Activated CD8-positive, alpha-beta T cell treated with anti-CD3 and anti-CD28 coated beads for 36 hours (primary cell): ENCODE measurements at regions of chr9 and their contacts with region 1.

Region 1: DNA sequence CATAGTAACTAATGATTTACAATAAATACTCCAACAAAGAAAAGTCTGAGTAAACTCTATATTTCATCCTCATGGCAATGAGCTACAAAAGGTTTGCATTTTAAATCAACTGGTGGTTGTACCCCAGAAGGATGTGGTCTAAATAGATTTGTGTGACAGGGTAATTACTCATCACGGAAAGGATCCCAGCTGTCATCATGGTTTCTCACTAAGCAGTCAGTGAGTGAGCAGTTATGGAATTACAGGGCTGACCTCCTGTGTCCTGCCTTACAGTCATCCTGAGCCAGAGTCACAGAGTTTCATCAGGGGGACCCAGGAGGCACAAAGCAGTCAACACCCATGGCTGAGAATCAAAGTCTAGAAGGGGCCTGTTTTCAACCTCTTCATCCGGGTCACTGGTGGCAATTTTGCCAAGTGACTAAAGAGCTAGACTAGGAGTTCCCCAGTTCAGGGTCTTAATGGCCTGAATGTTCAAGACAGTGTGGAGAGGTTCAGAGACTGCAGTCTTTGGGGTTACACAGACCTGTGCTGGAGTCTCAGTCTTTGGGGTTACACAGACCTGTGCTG is 210.7 kb upstream of the SLC24A2 start:
- DNase-seq: peak; percentile 86
- ATAC-seq: peak; percentile 95
- H3K4me3 Mint-ChIP-seq: no peak overlapping the region
- H3K27ac Mint-ChIP-seq: peak overlapping the region; percentile 99
- H3K4me1 Mint-ChIP-seq: peaks cover 43% of the 10 kb centered on the region
- H3K27me3 Mint-ChIP-seq: no peaks in the 10 kb centered on the region
- CTCF ChIP-seq: no peak

Region 2: DNA sequence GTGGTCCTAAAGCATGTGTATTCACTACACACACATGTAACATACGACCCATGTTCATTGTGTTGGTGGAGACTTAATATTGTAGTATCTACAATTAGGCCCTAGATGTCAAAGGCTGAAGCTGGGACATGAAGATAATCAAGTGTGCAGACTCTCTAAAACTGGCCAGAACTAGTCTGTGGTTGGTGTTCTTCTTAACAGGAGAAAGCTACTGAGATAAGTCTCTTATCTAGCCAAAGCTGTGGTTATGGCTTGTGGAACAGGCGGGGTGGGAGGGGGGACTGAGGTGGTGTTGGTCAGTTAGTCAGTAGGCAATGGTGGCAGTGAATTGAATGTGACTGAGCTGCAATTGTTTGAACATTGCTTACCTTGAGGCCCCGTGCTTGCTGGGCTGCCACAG is 98.0 kb before region 1 on chr9:
- CTCF ChIA-PET with region 1: no interaction called
- POLR2A ChIA-PET with region 1: no interaction called
- intact Hi-C with region 1: no loop called
- DNase-seq: no peak
- ATAC-seq: no peak
- H3K4me3 Mint-ChIP-seq: no peak overlapping the region
- H3K27ac Mint-ChIP-seq: no peak overlapping the region
- H3K4me1 Mint-ChIP-seq: no peaks in the 10 kb centered on the region
- H3K27me3 Mint-ChIP-seq: no peaks in the 10 kb centered on the region
- CTCF ChIP-seq: no peak

Region 3: DNA sequence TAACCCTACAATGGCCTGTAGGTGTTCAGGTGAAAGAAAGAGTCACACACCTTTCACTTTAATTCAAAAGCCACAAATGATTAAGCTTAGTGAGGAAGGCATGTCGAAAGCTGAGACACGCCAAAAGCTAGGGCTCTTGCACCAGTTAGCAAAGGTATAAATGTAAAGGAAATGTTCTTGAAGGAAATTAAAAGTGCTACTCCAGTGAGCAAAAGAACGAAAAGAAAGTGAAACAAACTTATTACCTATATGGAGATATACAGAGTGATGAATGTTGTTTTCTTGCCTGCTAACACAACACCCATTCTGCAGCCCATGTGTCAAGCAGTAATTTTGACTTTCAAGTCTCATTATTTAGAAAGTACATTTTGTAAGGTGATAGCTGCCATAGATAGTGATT is 43.5 kb after region 1 on chr9:
- CTCF ChIA-PET with region 1: no interaction called
- POLR2A ChIA-PET with region 1: no interaction called
- intact Hi-C with region 1: loop called (anchors 1 kb)
- DNase-seq: peak; percentile 8
- ATAC-seq: peak; percentile 78
- H3K4me3 Mint-ChIP-seq: peak overlapping the region; percentile 55
- H3K27ac Mint-ChIP-seq: peak overlapping the region; percentile 40
- H3K4me1 Mint-ChIP-seq: peaks cover 26% of the 10 kb centered on the region
- H3K27me3 Mint-ChIP-seq: no peaks in the 10 kb centered on the region
- CTCF ChIP-seq: no peak

Region 4: GRCh38 chr9:20054734-20055133 is 55.2 kb after region 1 on chr9:
- CTCF ChIA-PET with region 1: no interaction called
- POLR2A ChIA-PET with region 1: no interaction called
- intact Hi-C with region 1: no loop called
- DNase-seq: no peak
- ATAC-seq: no peak
- H3K4me3 Mint-ChIP-seq: no peak overlapping the region
- H3K27ac Mint-ChIP-seq: no peak overlapping the region
- H3K4me1 Mint-ChIP-seq: no peaks in the 10 kb centered on the region
- H3K27me3 Mint-ChIP-seq: peaks cover 4% of the 10 kb centered on the region
- CTCF ChIP-seq: no peak

Region 5: DNA sequence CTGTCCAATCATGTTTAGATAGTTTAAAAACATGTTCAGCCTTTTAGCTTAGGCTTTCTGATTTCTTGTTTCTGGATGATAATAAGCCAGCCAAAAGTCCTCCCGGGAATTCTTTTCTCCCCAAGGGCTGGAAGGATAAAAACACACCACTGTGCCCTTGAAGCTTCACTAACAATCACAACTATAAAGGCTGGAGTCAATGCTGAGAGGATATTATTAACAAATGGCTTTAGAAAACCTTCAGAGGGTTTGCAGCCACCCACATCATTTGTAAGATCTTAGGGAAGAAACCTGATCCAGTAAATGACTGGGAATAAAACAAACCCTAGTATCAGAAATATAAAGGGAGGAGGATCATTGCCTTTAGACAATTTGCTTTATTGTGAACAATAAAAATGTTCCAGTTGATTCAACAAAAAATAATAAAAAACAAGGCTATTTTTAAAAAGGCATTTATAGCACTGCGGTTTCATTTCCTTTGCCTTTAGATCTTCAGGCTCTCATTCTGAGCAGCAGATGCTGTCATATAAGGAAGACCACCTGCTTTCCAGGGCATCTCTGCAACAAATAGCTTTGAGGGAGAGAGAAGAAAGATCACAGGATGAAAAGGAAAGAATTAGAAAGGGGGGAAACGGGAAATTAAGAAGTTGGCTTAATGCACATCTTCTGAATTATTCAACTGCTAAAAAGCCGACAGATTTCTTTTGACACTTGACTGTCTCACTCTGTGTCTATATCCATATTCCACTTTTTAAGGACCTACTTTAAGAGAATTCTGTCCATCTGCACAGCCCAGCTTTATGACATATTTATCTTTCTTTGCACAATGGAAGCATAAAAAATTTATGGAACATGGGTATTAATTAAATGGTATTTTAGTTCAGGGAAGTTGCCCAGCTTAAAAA is 66.5 kb after region 1 on chr9:
- CTCF ChIA-PET with region 1: no interaction called
- POLR2A ChIA-PET with region 1: no interaction called
- intact Hi-C with region 1: no loop called
- DNase-seq: no peak
- ATAC-seq: no peak
- H3K4me3 Mint-ChIP-seq: no peak overlapping the region
- H3K27ac Mint-ChIP-seq: no peak overlapping the region
- H3K4me1 Mint-ChIP-seq: peaks cover 19% of the 10 kb centered on the region
- H3K27me3 Mint-ChIP-seq: no peaks in the 10 kb centered on the region
- CTCF ChIP-seq: no peak